Gastrocnemius medialis (tissue), 4 donors: ENCODE measurements at regions of chr7 and their contacts with region 1.

Region 1: DNA sequence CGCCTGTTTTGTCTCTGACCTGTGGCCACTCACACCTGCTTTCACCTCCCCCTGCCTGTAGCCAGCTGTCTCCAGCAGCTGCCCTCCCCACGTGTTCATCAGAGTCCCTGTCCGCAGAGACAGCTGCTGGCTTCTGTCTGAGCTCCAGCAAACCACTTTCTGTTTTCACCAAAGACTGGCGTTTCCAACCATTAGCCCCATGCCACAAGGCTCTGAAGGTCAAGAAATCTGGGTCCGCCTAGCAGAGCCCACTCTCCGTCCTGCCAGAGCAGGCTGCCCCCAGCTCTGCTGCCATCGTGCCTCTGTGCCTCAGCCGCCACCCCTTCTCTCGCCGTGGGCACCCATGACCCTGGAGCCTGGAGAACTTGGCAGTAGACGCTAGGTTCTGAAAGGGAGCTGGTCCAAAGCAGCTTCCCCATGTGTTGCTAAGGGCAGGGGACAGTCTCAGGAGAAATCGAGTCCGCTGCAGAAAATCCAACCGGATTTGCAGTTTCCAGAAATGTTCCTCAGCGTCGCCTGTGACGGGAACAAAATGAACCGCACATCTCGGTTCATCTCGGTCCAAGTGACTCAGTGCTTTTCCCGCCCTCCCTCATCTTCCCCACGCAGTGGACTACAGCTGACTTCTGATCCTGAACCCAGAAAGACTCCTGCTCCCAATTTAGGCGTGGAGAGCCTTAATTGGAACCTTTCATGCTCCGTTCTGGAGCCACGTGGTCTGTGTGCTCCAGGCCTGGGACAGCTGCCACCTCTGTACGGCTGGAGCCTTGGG is 28.0 kb downstream of the TMEM120A start:
- DNase-seq: peak; percentile 91 to 92
- ATAC-seq: peak; percentile 72 to 75
- H3K4me3 ChIP-seq: peak overlapping the region; percentile 38 to 61 (median 52)
- H3K27ac ChIP-seq: peak overlapping the region; percentile 91 to 97 (median 94)
- H3K4me1 ChIP-seq: peaks cover 76 to 86% of the 10 kb centered on the region in 2 donors
- H3K27me3 ChIP-seq: no peaks in the 10 kb centered on the region
- CTCF ChIP-seq: no peak
- POLR2A ChIP-seq: peak; percentile 51 to 76

Region 2: DNA sequence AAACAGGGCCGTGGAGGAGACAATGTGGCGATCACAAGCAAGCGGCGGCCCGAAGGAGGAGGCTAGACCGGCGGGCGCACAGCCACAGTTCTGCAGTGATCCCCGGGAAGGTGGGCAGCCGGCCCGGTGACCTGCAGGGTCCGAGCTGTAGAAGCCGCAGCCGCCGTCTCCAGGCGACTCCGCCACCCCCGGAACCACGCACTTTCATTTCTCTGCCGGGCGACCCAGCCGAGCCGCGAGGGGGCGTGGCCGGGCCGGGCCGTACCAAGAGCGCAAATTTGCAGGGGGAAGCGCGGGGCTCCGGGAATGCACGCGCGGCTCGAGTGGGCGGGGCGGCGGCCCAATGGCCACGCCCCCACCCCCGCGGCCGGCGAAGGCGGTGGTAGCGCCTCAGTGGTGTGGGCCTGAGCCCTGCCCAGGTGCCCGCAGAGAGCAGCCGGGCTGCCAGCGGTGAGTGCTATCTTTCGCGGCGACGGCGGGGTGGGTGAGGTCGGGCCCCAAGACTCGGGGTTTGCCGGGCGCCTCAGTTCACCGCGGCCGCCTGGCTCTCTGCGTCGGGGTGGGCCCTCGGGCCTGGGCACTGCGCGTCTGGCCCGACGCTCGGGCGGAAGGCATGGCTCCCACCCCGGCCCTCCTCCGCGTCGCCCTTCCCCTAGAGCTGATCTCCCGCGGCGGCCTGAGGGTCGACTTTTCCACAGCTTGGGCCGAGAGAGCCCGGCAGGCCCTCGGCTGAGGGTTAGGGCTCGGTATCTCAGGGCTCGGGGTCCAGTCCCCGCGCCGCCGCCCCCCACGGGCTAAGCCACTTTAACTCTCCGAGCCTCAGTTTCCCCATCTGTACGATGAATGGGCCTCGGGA is 51.4 kb before region 1 on chr7 and contains the start of gene POR:
- in situ Hi-C with region 1: no loop called
- intact Hi-C with region 1: loop called (anchors 2 kb)
- DNase-seq: peak; percentile 89 to 93
- ATAC-seq: peak; percentile 86 to 88
- H3K4me3 ChIP-seq: peak within 1 kb of the TSS; percentile 96 to 100 (median 98)
- H3K27ac ChIP-seq: peak within 1 kb of the TSS; percentile 95 to 99 (median 96)
- H3K4me1 ChIP-seq: peaks cover 32 to 35% of the 10 kb centered on the region in 2 donors
- H3K27me3 ChIP-seq: no peaks in the 10 kb centered on the region
- CTCF ChIP-seq: peak in 3 of 5 experiments; percentile 13 to 57 (median 22)
- POLR2A ChIP-seq: peak; percentile 99 to 100
- total RNA-seq, gene POR: 85.7 to 218 (median 115) TPM

Region 3: DNA sequence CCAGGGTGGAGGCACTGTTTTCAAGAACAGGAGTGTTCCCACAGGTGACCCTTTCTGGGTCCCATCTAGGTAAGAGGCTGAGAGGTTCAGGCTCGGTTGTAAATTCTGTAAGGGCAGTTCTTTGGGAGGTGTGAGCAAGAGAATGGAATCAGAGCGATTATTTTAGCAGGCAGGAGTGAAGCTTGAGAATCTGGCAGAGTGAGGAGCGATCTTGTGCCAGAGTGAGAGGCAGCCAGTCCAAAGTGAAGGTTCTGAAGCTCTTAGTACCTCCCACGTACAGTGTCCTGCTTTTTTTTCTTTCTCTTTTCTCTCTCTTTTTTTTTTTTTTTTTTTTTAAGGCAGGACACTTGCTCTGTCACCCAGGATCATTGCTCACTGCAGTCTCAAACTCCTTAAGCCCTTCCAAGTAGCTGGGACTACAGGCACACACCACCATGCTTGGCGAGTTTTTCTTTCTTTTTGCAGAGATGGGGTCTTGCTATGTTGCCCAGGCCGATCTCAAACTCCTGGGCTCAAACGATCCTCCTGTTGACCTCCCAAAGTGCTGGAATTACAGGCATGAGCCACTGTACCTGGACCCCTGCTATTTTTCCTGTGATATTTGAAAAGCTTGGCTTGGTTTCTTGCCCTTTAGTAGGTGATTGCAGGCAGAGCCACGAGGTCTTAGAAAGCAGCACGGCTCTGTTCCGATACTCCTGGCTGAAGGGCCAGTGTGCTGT is 40.5 kb before region 1 on chr7:
- in situ Hi-C with region 1: no loop called
- intact Hi-C with region 1: loop called (anchors 2 kb)
- DNase-seq: peak in 1 of 2 donors; percentile 38
- ATAC-seq: peak; percentile 69 to 78
- H3K4me3 ChIP-seq: no peak overlapping the region
- H3K27ac ChIP-seq: peak overlapping the region; percentile 69 to 83 (median 74)
- H3K4me1 ChIP-seq: peaks cover 40 to 53% of the 10 kb centered on the region in 2 donors
- H3K27me3 ChIP-seq: no peaks in the 10 kb centered on the region
- CTCF ChIP-seq: no peak
- POLR2A ChIP-seq: no peak

Region 4: DNA sequence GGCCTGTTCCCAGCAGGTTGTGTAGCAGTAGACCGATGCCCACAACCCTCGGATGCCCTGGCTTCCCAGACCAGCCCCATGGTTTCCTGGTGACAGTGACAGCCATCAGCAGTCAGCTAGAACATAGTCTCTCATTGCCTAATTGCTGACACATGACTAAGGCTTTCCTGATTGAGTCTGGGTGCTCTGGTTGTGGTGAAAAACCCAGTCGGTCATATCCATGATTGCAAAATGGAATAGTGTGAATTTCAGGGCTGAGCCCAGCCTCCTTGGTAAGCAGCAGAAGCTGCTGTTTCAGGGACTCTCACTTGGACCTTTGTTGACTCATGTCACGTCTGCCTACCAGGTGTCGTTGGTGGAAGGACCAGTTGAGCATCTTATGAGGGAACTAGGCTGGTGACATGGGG is 14.9 kb before region 1 on chr7:
- in situ Hi-C with region 1: no loop called
- intact Hi-C with region 1: loop called (anchors 1 kb)
- DNase-seq: peak; percentile 81 to 87
- ATAC-seq: peak; percentile 84 to 87
- H3K4me3 ChIP-seq: no peak overlapping the region
- H3K27ac ChIP-seq: peak overlapping the region; percentile 73 to 90 (median 80)
- H3K4me1 ChIP-seq: peaks cover 54 to 63% of the 10 kb centered on the region in 2 donors
- H3K27me3 ChIP-seq: no peaks in the 10 kb centered on the region
- CTCF ChIP-seq: peak in 1 of 5 experiments; percentile 42
- POLR2A ChIP-seq: peak; percentile 23 to 41